Activated B cell treated with CpG ODN at 0.5 μM for 24 hours (primary cell): ENCODE measurements at regions of chr18 and their contacts with region 1.

Region 1: DNA sequence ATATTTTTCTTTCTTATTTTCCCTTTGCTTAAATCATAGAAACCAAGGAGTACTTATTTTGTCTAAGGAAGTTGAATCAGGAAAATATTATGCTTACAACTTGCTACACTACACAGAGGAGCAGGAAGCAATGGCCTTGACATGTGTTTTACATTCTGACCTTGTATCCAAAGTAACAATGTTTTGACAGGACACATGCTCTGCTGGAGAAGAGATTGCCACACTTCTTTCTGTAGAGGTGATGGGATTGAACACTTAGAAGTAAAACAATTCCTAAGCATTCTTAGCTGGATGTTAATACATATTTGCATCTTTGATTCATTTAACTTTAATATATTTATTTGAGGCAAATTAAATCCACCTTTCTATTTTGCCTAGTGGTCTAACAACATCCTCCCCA is 929.1 kb downstream of the DSC3 start:
- DNase-seq: no peak
- ATAC-seq: no peak
- H3K4me3 Mint-ChIP-seq: no peak overlapping the region
- H3K27ac Mint-ChIP-seq: no peak overlapping the region
- H3K4me1 Mint-ChIP-seq: no peaks in the 10 kb centered on the region
- H3K27me3 Mint-ChIP-seq: no peaks in the 10 kb centered on the region
- CTCF ChIP-seq: no peak

Region 2: DNA sequence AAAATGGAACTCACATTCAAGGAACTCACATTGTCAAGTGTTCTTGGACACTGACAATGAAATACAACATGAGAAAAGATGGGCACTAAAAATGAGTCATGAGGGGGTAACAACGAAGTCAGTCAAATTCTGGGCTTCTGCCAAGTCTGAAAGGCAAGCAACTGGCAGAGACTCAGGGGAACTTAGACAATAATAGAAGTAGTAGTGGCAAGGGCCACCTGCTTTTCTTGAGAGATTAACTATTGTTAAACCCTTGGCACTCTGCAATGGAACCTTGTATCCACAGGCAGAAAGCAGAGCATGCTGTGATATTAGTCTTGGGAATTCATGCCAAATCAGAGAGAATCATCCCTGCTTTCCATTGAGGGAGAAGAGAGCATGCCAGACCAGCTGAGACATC is 1553.9 kb before region 1 on chr18:
- CTCF ChIA-PET with region 1: no interaction called
- POLR2A ChIA-PET with region 1: no interaction called
- intact Hi-C with region 1: no loop called
- DNase-seq: no peak
- ATAC-seq: no peak
- H3K4me3 Mint-ChIP-seq: no peak overlapping the region
- H3K27ac Mint-ChIP-seq: no peak overlapping the region
- H3K4me1 Mint-ChIP-seq: no peaks in the 10 kb centered on the region
- H3K27me3 Mint-ChIP-seq: no peaks in the 10 kb centered on the region
- CTCF ChIP-seq: no peak

Region 3: DNA sequence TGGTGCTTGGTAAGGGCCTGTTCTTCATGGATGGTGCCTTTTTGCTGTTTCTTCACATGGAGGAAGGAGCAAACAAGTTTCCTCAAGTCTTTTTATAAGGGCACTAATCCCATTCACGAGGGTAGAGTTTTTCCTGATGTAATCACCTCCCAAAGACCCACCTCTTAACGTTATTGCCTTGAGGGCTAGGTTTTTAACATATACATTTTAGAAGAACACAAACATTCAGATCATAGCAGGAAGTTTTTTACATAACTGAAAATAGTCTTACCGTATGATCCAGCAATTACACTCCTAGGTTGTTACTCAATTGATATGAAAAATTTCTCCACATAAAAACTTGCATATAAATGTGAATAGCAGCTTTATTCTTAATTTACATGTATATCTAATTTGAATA is 47.2 kb before region 1 on chr18:
- CTCF ChIA-PET with region 1: no interaction called
- POLR2A ChIA-PET with region 1: no interaction called
- intact Hi-C with region 1: loop called (anchors 5 kb)
- DNase-seq: no peak
- ATAC-seq: no peak
- H3K4me3 Mint-ChIP-seq: no peak overlapping the region
- H3K27ac Mint-ChIP-seq: no peak overlapping the region
- H3K4me1 Mint-ChIP-seq: no peaks in the 10 kb centered on the region
- H3K27me3 Mint-ChIP-seq: no peaks in the 10 kb centered on the region
- CTCF ChIP-seq: no peak